ENCODE measurements at regions of chr11 and their contacts with region 1.

Region 1: DNA sequence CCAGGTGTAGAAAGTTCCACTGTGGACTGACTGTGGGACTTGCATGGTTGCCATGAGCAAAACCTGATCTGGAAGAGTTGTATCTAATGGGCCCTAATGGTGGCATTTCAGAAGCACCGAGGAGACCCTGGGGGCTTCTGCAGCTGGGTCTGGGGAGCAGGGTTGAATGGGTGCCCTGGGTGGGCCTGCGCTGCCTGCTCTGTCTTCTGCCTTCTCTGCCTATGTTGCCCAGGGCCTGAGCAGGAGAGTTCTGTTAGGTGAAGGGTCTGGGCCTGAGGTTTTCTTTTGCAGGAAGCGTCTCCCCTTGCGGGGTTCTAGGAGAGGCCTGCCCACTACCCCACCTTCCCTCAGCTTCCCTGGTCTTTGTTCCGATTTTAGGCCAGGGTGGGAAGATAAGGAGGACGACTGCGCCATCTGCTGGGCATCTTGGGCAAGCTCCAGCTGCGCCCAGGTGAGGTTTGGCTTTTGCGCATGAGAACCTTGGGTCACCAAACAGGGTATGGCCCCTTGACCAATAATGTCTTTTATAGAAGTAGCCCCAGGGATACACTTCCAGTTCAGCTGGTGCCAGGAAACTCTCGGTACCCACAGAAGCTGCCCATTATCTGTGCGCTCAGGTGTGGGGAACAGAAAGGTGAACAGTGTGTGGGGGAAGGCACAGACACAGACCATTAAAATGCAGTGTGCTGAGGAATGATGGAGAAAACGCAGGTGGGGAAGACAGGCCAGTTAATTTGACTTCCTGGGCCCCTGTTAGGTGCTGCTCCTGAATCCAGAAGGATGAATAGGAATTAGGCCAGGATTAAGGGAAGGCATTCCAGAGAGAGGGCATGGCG is 23.2 kb downstream of the COMMD9 start:
- DNase-seq: peak; percentile 53

Region 2: DNA sequence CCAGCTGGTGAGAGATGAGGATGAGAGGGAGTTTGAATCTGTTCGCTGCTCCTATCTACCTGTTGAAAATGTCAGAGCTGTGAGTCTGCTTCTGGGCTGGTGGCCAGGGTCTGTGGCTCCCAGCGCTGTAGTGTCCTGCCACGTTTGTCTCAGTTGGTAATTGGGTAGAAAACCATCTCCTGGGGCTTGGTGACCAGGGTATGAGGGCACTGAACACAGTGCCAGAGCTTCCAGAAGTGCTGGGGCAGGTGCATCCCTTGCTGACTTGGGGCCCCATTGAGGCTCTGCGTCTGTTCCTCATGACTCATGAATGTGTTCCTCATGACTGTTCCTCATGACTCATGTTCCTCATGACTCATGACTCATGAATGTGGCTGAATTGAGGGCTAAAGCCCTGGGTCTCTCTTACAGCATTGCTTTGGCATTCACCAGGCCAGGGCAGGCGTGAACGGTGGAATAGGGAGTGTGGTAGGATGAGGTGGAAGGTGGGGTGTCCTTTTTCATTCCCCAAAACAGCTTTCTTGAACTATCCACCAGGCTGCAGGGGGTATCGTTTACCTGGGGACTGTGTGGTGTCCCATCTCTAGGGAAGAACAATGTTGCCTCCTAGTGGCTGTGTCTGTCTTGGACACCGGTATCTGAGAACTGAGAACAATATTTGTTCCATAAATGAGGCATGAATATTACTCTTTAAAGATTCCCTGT is 116.3 kb before region 1 on chr11:
- in situ Hi-C with region 1: loop called (anchors 25 kb)
- DNase-seq: peak; percentile 98

Measured in ACHN (cell line).